PC-9 (cell line): ENCODE measurements at regions of chr17 and their contacts with region 1.

Region 1: GRCh38 chr17:60677308-60678124 is at the start of gene BCAS3:
- DNase-seq: peak; percentile 97 to 99
- H3K4me3 ChIP-seq: peak within 1 kb of the TSS; percentile 56
- H3K27ac ChIP-seq: peak within 1 kb of the TSS; percentile 7; the same call in 1 of the 2 replicates
- H3K4me1 ChIP-seq: peaks cover 12% of the 10 kb centered on the region
- H3K27me3 ChIP-seq: no peaks in the 10 kb centered on the region
- CTCF ChIP-seq: no peak
- total RNA-seq, gene BCAS3: 25.4 and 26.0 TPM in 2 replicates

Region 2: GRCh38 chr17:59456428-59456827 is 1221.1 kb before region 1 on chr17:
- CTCF ChIA-PET with region 1: no interaction called
- POLR2A ChIA-PET with region 1: interaction called, 17 read pairs
- intact Hi-C with region 1: no loop called
- DNase-seq: no peak
- H3K4me3 ChIP-seq: no peak overlapping the region
- H3K27ac ChIP-seq: no peak overlapping the region
- H3K4me1 ChIP-seq: 0 out of 2 replicates have a peak, but pooled peaks cover 4% of the 10 kb centered on the region
- H3K27me3 ChIP-seq: no peaks in the 10 kb centered on the region
- CTCF ChIP-seq: no peak

Region 3: DNA sequence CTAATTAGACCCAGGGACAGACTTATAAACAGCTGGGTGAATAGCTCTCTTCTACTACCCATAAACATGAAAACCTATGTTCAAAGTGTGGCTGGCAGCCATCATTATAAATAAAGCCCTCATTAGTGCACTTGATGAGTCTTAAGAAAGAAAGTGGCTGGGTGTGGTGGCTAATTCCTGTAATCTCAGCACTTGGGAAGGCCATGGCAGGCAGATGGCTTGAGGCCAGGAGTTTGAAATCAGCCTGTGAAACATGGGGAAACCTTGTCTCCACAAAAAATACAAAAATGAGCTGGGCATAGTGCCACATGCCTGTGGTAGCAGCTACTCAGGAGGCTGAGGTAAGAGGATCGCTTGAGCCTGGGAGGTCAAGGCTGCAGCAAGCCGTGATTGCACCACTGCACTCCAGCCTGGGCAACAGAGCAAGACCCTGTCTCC is 123.1 kb before region 1 on chr17:
- CTCF ChIA-PET with region 1: no interaction called
- POLR2A ChIA-PET with region 1: interaction called, 11 read pairs
- intact Hi-C with region 1: no loop called
- DNase-seq: peak; percentile 36 to 43
- H3K4me3 ChIP-seq: no peak overlapping the region
- H3K27ac ChIP-seq: no peak overlapping the region
- H3K4me1 ChIP-seq: no peaks in the 10 kb centered on the region
- H3K27me3 ChIP-seq: no peaks in the 10 kb centered on the region
- CTCF ChIP-seq: no peak

Region 4: DNA sequence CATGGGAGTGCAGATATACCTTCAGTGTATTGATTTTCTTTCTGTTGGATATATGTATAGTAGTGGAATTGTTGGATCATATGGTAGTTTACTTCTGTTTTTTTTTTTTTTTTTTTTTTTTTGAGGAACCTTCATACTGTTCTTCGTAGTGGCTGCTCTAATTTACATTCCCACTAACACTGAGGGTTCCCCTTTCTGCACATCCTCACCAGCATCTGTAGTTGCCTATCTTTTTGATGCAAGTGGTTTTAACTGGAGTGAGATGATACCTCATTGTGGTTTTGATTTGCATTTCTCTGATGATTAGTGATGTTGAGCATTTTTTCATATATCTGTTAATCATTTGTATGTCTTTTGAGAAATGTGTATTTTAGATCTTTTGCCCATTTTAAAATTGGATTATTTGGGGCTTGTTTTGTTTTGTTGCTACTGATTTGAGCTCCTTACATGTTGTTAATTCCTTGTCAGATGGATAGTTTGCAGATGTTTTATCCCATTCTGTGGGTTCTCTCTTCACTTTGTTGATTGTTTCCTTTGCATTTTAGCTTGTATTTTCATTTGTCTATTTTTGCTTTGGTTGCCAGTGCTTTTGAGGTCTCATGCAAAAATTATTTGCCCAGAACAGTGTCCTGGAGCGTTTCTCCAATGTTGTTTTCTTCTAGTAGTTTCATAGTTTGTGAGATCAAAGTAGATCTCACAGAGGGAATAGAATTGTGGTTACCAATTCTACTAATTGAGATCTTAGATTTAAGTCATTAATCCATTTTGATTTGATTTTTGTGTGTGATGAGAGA is 24.9 kb before region 1 on chr17:
- CTCF ChIA-PET with region 1: no interaction called
- POLR2A ChIA-PET with region 1: no interaction called
- intact Hi-C with region 1: no loop called
- DNase-seq: no peak
- H3K4me3 ChIP-seq: no peak overlapping the region
- H3K27ac ChIP-seq: no peak overlapping the region
- H3K4me1 ChIP-seq: no peaks in the 10 kb centered on the region
- H3K27me3 ChIP-seq: no peaks in the 10 kb centered on the region
- CTCF ChIP-seq: no peak